ENCODE measurements at regions of chr2 and their contacts with region 1.

Region 1: GRCh38 chr2:227661019-227661649 is 5.5 kb upstream of the SCYGR5 start:
- DNase-seq: no peak
- H3K4me3 ChIP-seq: no peak overlapping the region
- H3K27ac ChIP-seq: no peak overlapping the region
- H3K4me1 ChIP-seq: 0 out of 2 replicates have a peak, but pooled peaks cover under 1% of the 10 kb centered on the region
- H3K27me3 ChIP-seq: no peaks in the 10 kb centered on the region

Region 2: DNA sequence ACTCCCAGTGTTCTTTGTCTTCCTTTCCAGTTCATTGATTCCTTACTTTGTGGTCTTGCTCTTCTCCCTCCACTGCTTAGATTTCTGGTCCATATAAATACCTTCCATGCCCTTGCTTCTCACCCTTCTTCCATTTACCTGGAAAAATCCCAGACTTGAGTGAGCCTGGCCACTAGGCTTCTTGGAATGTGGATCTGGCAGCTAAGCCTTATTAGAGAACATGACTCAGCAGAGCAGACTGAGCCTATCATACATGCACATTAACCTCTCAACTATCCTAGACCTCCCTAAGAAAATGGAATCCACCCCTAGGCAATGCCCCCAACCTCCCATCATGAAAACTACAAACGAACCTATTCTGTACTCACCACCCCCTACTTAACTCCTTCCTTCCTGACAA is 697.6 kb before region 1 on chr2:
- in situ Hi-C with region 1: no loop called
- DNase-seq: peak; percentile 78
- H3K4me3 ChIP-seq: no peak overlapping the region
- H3K27ac ChIP-seq: no peak overlapping the region
- H3K4me1 ChIP-seq: peaks cover 9% of the 10 kb centered on the region
- H3K27me3 ChIP-seq: no peaks in the 10 kb centered on the region

Region 3: DNA sequence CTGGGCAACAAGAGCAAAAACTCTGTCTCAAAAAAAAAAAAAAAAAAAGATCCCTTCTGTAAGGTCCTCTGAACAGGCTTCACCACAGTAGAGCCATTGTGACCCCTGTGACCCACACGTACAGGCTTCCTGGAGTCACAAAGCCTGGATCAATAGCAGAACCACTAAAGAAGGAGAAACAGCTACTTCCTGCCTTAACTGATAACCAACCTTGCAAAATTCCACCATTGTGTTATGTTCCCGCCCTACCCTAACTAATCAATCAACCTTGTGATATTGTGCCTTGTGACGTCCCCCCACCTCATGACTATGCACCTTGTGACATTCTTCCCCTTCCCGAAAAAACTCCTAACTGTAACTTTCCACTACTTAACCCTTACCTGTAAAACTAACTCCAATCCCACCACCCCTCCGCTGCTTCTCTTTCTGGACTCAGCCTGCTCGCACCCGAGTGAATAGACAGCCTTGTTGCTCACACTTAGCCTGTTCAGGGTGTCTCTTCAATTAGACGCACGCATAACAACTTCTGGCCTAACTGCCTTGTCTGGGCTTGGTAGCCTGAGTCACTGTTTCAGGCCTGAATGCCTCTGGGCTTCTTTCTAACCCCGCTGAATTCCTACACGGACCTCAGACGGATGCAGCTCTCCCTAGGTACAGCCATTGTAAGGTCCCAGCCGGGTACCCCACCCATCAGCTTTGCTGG is 98.4 kb after region 1 on chr2:
- in situ Hi-C with region 1: loop called (anchors 10 kb)
- DNase-seq: no peak
- H3K4me3 ChIP-seq: no peak overlapping the region
- H3K27ac ChIP-seq: no peak overlapping the region
- H3K4me1 ChIP-seq: no peaks in the 10 kb centered on the region
- H3K27me3 ChIP-seq: no peaks in the 10 kb centered on the region